Psoas muscle (tissue), 8 donors: ENCODE measurements at regions of chrX and their contacts with region 1.

Region 1: DNA sequence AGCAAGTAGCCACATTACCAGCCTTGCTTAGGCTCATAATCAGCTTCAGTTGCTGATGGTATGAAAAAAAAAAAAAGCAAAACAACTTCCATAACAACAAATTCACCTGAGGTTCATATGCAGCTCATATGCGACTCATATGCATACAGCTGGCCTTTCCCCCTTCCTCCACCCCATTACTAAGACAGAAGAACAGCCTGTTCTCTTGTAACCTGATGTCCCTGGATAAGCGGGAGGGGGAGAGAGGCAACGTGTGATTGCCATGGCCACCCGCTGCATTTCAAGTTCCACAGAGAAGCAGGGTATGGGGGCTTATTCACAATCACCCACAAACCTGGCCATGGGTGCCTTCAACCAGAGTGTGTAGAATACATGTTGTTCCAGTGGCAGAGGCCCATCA is 95.1 kb upstream of the DGKK start:
- DNase-seq: no peak
- ATAC-seq: no peak
- H3K4me3 ChIP-seq: no peak overlapping the region
- H3K27ac ChIP-seq: no peak overlapping the region
- H3K4me1 ChIP-seq: no peaks in the 10 kb centered on the region
- H3K27me3 ChIP-seq: peaks cover 0 to 4% (median 0%) of the 10 kb centered on the region in 3 donors
- CTCF ChIP-seq: no peak

Region 2: DNA sequence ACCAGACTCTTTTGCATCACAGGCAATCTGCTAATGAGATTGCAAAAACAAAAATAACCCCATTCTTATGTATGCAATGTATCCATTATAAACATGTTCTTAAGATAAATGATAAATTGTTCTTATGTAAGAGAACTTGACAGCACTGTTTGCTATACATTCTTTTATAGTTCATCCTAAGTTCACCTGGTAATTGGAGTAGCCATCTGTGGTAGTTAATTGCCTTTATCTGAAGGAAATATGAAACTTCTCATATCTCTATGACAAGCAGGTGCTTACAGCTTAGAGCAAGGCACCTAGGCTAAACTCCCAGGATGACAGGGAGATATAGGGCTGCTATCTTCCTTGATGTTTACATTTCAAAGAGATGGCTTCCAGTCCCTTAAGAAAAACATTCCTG is 664.7 kb before region 1 on chrX:
- intact Hi-C with region 1: loop called in 1 of 2 experiments (anchors 10 kb)
- DNase-seq: no peak
- ATAC-seq: no peak
- H3K4me3 ChIP-seq: no peak overlapping the region
- H3K27ac ChIP-seq: no peak overlapping the region
- H3K4me1 ChIP-seq: no peaks in the 10 kb centered on the region
- H3K27me3 ChIP-seq: peaks cover 0 to 20% (median 0%) of the 10 kb centered on the region in 3 donors
- CTCF ChIP-seq: no peak

Region 3: DNA sequence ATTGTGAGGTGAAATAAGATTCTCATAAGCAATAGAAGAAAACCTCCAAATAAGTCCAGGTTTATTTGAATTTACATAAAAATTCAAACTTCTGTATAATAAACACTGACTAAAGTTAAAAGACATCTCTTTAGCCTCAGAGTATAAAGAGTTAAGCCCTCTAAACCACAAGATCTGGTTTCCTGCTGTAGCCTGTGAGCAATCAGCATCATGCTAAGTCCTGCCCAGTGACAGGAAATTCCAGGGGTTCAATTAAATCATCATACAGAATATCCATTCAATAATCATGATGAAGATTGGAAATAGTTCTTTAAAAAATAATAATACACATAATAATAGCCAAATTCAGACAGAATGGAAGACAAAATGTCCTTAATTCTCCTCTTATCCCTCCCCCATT is 44.1 kb after region 1 on chrX:
- intact Hi-C with region 1: no loop called
- DNase-seq: no peak
- ATAC-seq: no peak
- H3K4me3 ChIP-seq: no peak overlapping the region
- H3K27ac ChIP-seq: no peak overlapping the region
- H3K4me1 ChIP-seq: no peaks in the 10 kb centered on the region
- H3K27me3 ChIP-seq: peaks cover 0 to 13% (median 0%) of the 10 kb centered on the region in 3 donors
- CTCF ChIP-seq: no peak

Region 4: GRCh38 chrX:50680990-50681389 is 115.3 kb after region 1 on chrX:
- intact Hi-C with region 1: no loop called
- DNase-seq: no peak
- ATAC-seq: no peak
- H3K4me3 ChIP-seq: no peak overlapping the region
- H3K27ac ChIP-seq: no peak overlapping the region
- H3K4me1 ChIP-seq: no peaks in the 10 kb centered on the region
- H3K27me3 ChIP-seq: peaks cover 0 to 46% (median 0%) of the 10 kb centered on the region in 3 donors
- CTCF ChIP-seq: peak; percentile 23